Endothelial cell of umbilical vein (primary cell): ENCODE measurements at regions of chr4 and their contacts with region 1.

Region 1: DNA sequence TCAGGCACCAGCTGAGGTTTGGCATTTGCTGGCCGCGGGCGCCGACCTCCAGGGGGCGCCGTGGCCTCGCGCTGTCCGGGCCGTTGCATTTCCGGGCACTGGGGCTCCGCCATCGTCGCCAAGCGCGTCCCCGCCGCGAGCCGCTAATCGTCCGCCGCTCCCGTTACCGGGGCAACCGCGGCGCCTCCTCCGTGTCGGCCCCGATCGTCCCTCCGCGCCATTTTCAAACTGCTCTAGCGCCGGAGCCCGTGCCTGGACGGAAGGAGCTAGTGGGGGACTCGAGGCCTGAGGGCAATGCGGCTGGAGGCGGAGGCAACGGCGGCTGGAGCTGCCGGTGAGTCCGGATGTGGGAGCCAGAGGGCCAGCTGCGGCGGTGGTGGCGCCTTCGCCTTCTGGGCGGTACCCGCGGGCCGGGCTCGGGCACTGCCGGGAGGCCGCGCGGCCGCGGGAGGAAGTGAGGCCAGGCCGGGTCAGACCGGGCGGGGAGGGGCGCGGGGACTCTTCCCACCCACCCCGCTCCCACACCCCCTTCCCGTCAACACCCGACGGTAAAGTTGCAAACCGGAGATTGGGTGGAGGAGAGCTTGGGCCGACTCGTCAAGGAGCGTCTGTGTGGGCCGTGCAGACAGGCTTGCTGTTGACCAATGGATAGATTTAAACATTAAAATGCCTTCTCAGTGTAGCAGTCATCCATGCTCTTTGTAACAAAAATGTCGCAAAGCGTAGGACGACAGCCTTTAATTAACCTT is at the start of gene CEP135:
- DNase-seq: peak; percentile 94
- H3K4me3 ChIP-seq: peak within 1 kb of the TSS; percentile 72 to 99 (median 72)
- H3K27ac ChIP-seq: peak within 1 kb of the TSS; percentile 100
- H3K4me1 ChIP-seq: peaks cover 31% of the 10 kb centered on the region
- H3K27me3 ChIP-seq: no peaks in the 10 kb centered on the region
- CTCF ChIP-seq: peak; percentile 96 to 98
- POLR2A ChIP-seq: peak; percentile 89
- total RNA-seq, gene CEP135: 14.7 and 15.3 TPM in 2 replicates

Region 2: DNA sequence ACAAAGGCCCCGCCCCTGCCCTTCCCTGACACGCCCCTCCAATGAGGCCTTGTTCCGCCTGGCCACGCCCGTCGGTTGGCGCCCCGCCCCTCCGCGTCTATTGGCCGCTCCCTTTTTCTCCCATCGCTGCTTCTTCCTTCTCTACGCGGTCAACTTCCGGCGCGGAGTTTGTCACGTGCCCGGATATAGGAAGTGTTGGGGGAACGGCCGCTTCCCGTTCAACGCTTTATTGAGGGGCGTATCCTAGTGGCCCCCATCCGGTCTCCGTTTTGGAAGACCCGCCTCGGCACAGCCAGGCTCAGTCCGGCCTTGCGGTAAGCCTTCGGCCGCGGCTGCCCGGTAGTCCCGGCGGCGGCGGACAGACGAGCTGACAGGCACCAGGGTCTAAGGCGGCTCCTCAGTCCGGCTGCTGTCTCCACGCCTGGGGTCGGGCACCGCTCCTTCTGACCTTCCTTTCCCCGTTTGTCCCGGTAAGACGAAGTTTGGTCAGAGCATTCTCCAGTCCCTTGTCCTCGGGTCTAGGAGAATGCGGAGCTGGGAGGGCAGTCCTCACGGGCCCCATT is 95.3 kb before region 1 on chr4 and contains the start of gene EXOC1:
- CTCF ChIA-PET with region 1: no interaction called
- POLR2A ChIA-PET with region 1: no interaction called
- dilution Hi-C with region 1: no loop called
- intact Hi-C with region 1: loop called (anchors 2 kb)
- DNase-seq: peak; percentile 97
- H3K4me3 ChIP-seq: peak within 1 kb of the TSS; percentile 59 to 79 (median 64)
- H3K27ac ChIP-seq: peak within 1 kb of the TSS; percentile 51
- H3K4me1 ChIP-seq: peaks cover 8% of the 10 kb centered on the region
- H3K27me3 ChIP-seq: peaks cover 16 to 22% of the 10 kb centered on the region in 2 experiments
- CTCF ChIP-seq: no peak
- POLR2A ChIP-seq: peak; percentile 83
- total RNA-seq, gene EXOC1: 30.5 and 33.3 TPM in 2 replicates

Region 3: DNA sequence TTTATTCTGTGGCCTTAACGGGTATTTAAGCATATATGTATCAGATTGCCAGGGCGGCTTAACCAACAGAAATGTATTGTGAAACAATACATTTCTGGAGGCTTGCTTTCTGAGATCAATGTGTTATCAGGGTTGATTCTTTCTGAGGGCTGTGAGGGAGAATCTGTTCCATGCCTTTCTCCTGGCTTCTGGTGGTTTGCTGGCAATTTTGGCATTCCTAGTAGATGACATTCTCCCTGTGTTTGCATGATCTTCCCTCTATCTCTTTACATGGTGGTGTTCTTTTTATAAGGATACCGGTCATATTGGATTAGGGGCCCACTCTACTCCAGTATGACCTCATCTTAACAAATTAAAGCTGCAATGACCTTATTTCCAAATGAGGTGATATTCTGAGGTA is 17.1 kb before region 1 on chr4:
- CTCF ChIA-PET with region 1: interaction called, 11 read pairs
- POLR2A ChIA-PET with region 1: interaction called, 6 read pairs
- dilution Hi-C with region 1: no loop called
- intact Hi-C with region 1: no loop called
- DNase-seq: no peak
- H3K4me3 ChIP-seq: no peak overlapping the region
- H3K27ac ChIP-seq: no peak overlapping the region
- H3K4me1 ChIP-seq: no peaks in the 10 kb centered on the region
- H3K27me3 ChIP-seq: no peaks in the 10 kb centered on the region
- CTCF ChIP-seq: no peak
- POLR2A ChIP-seq: no peak

Region 4: DNA sequence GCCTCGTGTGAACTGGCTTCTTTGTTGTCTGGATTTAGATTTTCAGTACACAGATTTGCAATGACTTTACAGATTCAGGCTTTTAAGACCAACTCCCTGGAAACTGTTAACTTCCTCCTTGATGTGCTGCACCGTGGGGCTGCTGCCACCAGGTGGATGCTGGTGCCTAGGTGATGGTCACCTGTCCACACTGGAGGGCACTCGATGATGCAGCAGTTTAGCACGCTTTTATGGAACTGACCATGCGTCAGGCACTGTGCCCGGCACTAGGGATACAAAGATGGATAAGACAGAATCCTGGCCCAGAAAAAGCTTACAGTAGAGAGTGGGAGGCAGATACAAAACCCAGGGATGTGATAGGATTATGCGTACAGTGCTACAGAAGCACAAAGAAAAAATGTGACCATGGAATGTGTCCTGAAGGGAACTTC is 180.5 kb after region 1 on chr4:
- CTCF ChIA-PET with region 1: no interaction called
- POLR2A ChIA-PET with region 1: no interaction called
- dilution Hi-C with region 1: no loop called
- intact Hi-C with region 1: loop called (anchors 10 kb)
- DNase-seq: no peak
- H3K4me3 ChIP-seq: no peak overlapping the region
- H3K27ac ChIP-seq: no peak overlapping the region
- H3K4me1 ChIP-seq: peaks cover 23% of the 10 kb centered on the region
- H3K27me3 ChIP-seq: no peaks in the 10 kb centered on the region
- CTCF ChIP-seq: no peak
- POLR2A ChIP-seq: no peak

Region 5: GRCh38 chr4:56387023-56388001 is 438.4 kb after region 1 on chr4 and contains the start of gene AASDH:
- CTCF ChIA-PET with region 1: interaction called, 14 read pairs
- POLR2A ChIA-PET with region 1: interaction called, 5 read pairs
- dilution Hi-C with region 1: no loop called
- intact Hi-C with region 1: loop called (anchors 1 kb)
- DNase-seq: peak; percentile 98
- H3K4me3 ChIP-seq: peak within 1 kb of the TSS; percentile 67 to 92 (median 91)
- H3K27ac ChIP-seq: peak within 1 kb of the TSS; percentile 73
- H3K4me1 ChIP-seq: peaks cover 13% of the 10 kb centered on the region
- H3K27me3 ChIP-seq: no peaks in the 10 kb centered on the region
- CTCF ChIP-seq: no peak
- POLR2A ChIP-seq: peak; percentile 84
- total RNA-seq, gene AASDH: 6.9 and 9.5 TPM in 2 replicates

Region 6: DNA sequence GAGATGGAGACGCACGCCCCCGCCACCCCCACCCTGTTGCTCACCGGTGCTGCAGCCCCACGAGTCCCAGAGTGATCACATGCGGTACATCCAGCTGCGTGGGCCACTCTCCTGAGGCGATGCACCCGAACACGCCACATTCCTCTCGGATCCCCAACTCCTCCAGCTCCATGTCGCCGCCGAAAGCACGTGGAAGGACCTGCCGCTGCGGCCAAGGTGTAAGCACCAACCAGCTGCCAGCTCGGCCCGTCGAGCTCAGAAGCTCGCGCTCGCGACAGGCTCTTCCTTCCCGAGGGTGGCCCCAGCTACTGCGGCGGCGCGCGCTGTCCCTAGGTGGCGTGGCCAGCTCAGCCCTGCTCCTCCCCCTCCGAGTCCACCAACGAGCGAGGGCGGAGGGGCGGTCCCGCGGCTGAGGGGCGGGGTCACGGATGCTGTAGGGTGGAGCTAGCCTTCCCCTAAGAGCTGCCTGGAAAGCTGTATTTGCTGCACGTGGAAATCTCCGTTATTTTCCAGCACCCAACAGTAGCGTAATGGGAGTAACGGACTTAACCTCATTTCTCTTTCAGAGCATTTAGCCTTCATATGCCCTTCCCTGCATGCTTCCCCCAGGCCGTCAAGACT is 486.5 kb after region 1 on chr4 and contains the start of gene PPAT:
- CTCF ChIA-PET with region 1: interaction called, 5 read pairs
- POLR2A ChIA-PET with region 1: interaction called, 8 read pairs
- dilution Hi-C with region 1: no loop called
- intact Hi-C with region 1: loop called (anchors 10 kb)
- DNase-seq: peak; percentile 100
- H3K4me3 ChIP-seq: peak within 1 kb of the TSS; percentile 77 to 86 (median 83)
- H3K27ac ChIP-seq: peak within 1 kb of the TSS; percentile 87
- H3K4me1 ChIP-seq: peaks cover 19% of the 10 kb centered on the region
- H3K27me3 ChIP-seq: no peaks in the 10 kb centered on the region
- CTCF ChIP-seq: peak in 1 of 2 donors; percentile 25
- POLR2A ChIP-seq: peak; percentile 83
- total RNA-seq, gene PPAT: 21.8 and 25.5 TPM in 2 replicates

Region 7: DNA sequence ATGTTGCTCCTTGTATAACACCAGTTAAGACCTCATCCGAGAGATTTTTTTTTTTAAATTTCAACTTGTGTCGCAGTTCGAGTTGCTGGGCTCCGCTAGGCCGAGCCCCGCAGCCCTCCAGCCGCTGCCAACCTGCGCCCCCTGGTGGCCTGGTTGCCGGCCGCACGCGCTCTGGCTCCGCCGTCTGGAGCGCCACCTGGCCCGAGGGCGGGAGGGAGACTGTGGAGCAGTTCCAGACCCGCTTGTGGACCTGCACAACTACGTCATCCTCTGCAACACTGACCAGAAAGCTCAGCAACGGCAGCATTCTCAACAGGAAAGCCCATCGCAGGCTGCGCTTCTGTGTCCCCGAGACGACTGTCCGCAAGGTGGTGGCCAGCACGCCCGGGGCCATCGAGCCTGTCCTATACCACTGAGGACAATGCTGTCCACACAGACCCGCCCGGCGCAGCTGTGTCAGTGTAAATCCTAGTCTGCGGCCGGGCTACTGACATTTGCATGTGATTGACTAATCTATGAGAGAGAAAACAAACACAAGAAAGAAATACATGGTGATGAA is 595.8 kb after region 1 on chr4:
- CTCF ChIA-PET with region 1: interaction called, 3 read pairs
- POLR2A ChIA-PET with region 1: no interaction called
- dilution Hi-C with region 1: no loop called
- intact Hi-C with region 1: loop called (anchors 10 kb)
- DNase-seq: peak; percentile 85
- H3K4me3 ChIP-seq: peak overlapping the region in 2 of 3 experiments; percentile 43 to 51
- H3K27ac ChIP-seq: no peak overlapping the region
- H3K4me1 ChIP-seq: peaks cover 3% of the 10 kb centered on the region
- H3K27me3 ChIP-seq: peaks cover 8 to 9% of the 10 kb centered on the region in 2 experiments
- CTCF ChIP-seq: peak; percentile 98 to 99
- POLR2A ChIP-seq: no peak